ENCODE measurements at regions of chr12 and their contacts with region 1.

Region 1: DNA sequence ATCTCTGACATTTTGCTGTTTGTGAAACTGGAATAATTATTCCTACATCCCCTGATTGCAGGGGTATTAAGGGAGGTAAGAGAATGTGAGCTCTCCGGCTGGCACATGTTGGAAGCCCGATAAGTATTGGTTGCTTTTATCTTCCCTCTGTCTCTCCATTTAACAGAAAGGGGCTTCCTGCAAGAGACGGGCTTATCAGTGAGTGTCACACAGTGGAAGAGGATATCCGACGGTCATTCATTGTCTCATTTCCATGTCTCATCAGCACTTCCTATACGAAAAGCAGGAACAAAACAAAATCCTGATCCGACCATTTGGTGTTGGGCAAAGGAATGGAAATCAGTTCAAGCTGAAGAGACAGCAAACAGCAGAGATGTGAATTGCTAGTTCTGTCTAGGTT is 10.7 kb downstream of the DYRK4 start:
- DNase-seq: no peak
- ATAC-seq: no peak
- H3K4me3 ChIP-seq: no peak overlapping the region
- H3K27ac ChIP-seq: no peak overlapping the region
- H3K4me1 ChIP-seq: no peaks in the 10 kb centered on the region
- H3K27me3 ChIP-seq: no peaks in the 10 kb centered on the region
- CTCF ChIP-seq: no peak
- POLR2A ChIP-seq: no peak
- RAD21 ChIP-seq: no peak

Region 2: GRCh38 chr12:4621511-4621910 is 48.8 kb after region 1 on chr12:
- CTCF ChIA-PET with region 1: no interaction called
- POLR2A ChIA-PET with region 1: no interaction called
- dilution Hi-C with region 1: no loop called
- in situ Hi-C with region 1: no loop called
- intact Hi-C with region 1: loop called (anchors 5 kb)
- DNase-seq: no peak
- ATAC-seq: no peak
- H3K4me3 ChIP-seq: no peak overlapping the region
- H3K27ac ChIP-seq: no peak overlapping the region
- H3K4me1 ChIP-seq: no peaks in the 10 kb centered on the region
- H3K27me3 ChIP-seq: peaks cover 2% of the 10 kb centered on the region; the same call in 1 of the 2 replicates
- CTCF ChIP-seq: no peak
- POLR2A ChIP-seq: no peak
- RAD21 ChIP-seq: no peak